Mammary epithelial cell (primary cell): ENCODE measurements at regions of chr22 and their contacts with region 1.

Region 1: DNA sequence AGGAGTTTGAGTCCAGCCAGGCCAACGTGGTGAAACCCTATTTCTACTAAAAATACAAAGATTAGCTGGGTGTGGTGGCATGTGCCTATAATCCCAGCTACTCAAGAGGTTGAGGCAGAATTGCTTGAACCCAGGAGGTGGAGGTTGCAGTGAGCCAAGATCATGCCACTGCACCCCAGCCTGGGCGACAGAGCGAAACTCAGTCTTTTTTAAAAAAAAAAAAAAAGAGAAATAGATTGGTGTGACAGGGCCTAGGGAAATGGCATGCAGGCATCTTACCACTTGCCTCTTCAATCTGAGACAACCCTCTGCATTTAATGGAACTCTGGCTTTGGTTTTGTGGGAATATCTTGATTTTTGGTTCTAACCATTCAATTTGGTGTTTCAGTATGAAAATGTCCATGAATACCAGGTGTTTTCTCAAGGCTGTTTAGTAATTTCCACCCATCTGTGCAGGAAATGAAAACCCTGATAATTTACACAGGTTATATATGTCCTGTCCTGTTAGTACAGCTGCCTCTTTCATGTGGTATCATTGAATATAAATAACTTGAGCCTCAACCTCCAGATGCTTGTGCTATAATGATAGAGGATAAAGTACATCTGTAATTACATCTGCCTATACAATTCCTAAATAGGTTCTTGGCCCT is 8.4 kb downstream of the XBP1 start:
- DNase-seq: no peak
- H3K4me3 ChIP-seq: no peak overlapping the region
- H3K27ac ChIP-seq: no peak overlapping the region
- H3K4me1 ChIP-seq: no peaks in the 10 kb centered on the region
- H3K27me3 ChIP-seq: no peaks in the 10 kb centered on the region
- CTCF ChIP-seq: no peak

Region 2: DNA sequence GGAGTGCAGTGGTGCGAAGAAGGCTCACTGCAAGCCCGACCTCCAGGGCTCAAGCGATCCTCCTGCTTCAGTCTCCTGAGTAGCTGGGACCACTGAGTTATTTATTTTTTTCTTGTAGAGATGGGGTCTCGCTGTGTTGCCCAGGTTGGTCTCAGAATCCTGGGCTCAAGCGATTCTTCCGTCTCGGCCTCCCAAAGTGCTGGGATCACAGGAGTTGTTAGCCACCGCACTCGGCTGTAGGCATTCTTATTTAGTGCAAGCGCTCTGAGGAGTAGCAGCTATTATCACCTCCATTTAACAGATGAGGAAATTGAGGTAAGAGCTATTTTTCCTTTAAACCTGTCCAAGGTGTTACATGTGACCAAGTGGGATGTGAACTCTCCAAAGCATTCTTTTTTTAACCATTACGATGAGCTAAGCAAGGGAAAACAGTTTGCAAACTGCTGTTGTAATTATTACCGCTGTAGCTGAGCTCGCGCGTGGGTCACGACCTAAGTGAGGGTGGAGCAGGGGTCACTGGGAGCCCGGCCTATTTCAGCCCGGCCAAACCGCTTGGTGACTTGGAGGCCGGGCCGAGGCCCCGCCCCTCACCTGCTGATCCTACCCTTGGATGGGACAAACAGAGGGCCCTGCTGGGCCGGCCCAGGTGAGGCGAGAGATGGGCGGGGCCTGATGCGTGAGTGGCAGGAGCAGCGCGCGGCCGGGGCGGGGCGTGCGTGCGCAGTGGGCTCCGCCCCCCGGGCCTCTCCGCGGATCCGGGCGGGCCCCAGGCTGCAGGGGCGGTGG is 280.4 kb after region 1 on chr22:
- CTCF ChIA-PET with region 1: interaction called, 22 read pairs
- dilution Hi-C with region 1: no loop called
- in situ Hi-C with region 1: no loop called
- intact Hi-C with region 1: no loop called
- DNase-seq: peak; percentile 89
- H3K4me3 ChIP-seq: peak overlapping the region in 1 of 3 experiments; percentile 76
- H3K27ac ChIP-seq: peak overlapping the region; percentile 51
- H3K4me1 ChIP-seq: peaks cover 28% of the 10 kb centered on the region
- H3K27me3 ChIP-seq: no peaks in the 10 kb centered on the region
- CTCF ChIP-seq: no peak